Common myeloid progenitor, CD34-positive (primary cell): ENCODE measurements at regions of chr10 and their contacts with region 1.

Region 1: GRCh38 chr10:114829160-114829909 is 7.8 kb downstream of the FHIP2A start:
- DNase-seq: no peak
- H3K4me3 ChIP-seq: no peak overlapping the region
- H3K27ac ChIP-seq: no peak overlapping the region
- H3K4me1 ChIP-seq: peaks cover 2 to 22% (median 9%) of the 10 kb centered on the region in 4 experiments
- H3K27me3 ChIP-seq: no peaks in the 10 kb centered on the region

Region 2: DNA sequence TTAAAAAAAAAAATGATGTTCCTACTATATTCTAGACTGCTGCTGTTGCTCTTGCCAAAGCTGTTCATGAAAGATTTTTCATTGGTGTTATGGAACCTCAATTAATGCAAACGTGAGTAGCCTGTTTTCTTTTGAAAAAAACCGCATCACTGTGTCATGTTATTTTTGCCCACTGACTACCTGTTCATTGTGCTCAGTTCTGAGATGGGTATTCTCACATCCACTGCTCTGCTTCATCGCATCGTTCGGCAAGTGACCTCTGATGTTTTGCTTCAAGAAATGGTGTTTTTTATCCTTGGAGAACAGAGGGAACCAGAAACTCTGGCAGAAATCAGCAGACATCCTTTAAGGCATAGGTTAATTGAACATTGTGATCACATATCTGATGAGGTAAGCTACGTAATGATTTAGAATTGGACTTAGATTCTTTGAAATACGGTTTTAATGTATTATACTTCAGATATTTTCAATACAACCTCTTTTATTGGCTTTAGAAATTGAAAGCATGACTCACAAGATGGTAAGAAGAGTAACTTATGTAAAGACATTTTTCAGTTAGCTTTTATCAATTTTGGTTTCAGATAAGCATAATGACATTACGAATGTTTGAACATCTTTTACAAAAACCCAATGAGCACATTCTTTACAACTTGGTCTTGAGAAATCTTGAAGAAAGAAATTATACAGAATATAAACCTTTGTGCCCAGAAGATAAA is 16.8 kb after region 1 on chr10:
- CTCF ChIA-PET with region 1: interaction called, 11 read pairs
- POLR2A ChIA-PET with region 1: interaction called, 3 read pairs
- DNase-seq: no peak
- H3K4me3 ChIP-seq: no peak overlapping the region
- H3K27ac ChIP-seq: no peak overlapping the region
- H3K4me1 ChIP-seq: no peaks in the 10 kb centered on the region
- H3K27me3 ChIP-seq: no peaks in the 10 kb centered on the region